GM18951 (cell line): ENCODE measurements at regions of chr19 and their contacts with region 1.

Region 1: GRCh38 chr19:47436712-47437401 is 17.5 kb upstream of the MEIS3 start:
- POLR2A ChIP-seq: no peak

Region 2: DNA sequence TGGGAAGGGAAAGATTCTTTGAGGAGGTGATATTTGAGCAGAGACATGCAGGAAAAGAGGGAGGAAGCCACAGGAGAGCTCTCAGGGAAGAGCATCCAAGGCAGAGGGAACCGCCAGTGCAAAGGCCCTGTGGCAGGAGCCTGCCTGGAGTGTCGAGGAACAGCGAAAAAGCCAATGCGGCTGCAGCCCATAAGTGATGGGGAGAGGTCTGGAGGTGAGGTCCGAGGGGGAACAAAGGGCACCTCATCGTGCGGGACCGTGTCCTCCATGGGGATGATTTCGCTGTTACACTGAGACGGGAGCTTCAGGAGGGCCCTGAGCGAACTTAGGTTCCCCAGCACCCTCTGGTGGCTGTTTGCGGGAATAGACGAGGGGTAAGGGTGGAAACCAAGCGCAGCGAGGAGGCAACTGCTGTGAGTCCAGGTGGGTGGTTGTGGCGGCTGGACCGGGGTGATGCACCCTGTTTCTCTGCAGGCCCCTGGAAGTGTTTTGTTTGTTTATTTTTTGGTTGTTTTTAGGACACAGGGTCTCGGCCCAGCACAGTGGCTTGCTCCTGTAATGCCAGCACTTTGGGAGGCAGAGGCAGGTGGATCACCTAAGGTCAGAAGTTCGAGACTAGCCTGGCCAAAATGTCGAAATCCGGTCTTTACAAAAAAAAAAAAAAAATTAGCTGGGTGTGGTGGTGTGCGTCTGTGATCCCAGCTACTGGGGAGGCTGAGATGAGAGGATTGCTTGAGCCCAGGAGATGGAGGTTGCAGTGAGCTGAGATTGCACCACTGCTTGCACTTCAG is 270.5 kb after region 1 on chr19:
- in situ Hi-C with region 1: loop called (anchors 5 kb)
- POLR2A ChIP-seq: no peak